ENCODE measurements at regions of chr1 and their contacts with region 1.

Region 1: GRCh38 chr1:151739590-151740375 is 18.5 kb downstream of the RIIAD1 start:
- DNase-seq: peak; percentile 75
- H3K4me3 Mint-ChIP-seq: no peak overlapping the region
- H3K27ac Mint-ChIP-seq: no peak overlapping the region
- H3K4me1 Mint-ChIP-seq: peaks cover 17% of the 10 kb centered on the region
- H3K27me3 Mint-ChIP-seq: no peaks in the 10 kb centered on the region
- CTCF ChIP-seq: no peak

Region 2: GRCh38 chr1:151443846-151444782 is 295.7 kb before region 1 on chr1:
- CTCF ChIA-PET with region 1: interaction called, 5 read pairs
- intact Hi-C with region 1: loop called (anchors 5 kb)
- DNase-seq: peak; percentile 76
- H3K4me3 Mint-ChIP-seq: no peak overlapping the region
- H3K27ac Mint-ChIP-seq: peak overlapping the region; percentile 9
- H3K4me1 Mint-ChIP-seq: peaks cover 8% of the 10 kb centered on the region
- H3K27me3 Mint-ChIP-seq: no peaks in the 10 kb centered on the region
- CTCF ChIP-seq: peak; percentile 64

Region 3: DNA sequence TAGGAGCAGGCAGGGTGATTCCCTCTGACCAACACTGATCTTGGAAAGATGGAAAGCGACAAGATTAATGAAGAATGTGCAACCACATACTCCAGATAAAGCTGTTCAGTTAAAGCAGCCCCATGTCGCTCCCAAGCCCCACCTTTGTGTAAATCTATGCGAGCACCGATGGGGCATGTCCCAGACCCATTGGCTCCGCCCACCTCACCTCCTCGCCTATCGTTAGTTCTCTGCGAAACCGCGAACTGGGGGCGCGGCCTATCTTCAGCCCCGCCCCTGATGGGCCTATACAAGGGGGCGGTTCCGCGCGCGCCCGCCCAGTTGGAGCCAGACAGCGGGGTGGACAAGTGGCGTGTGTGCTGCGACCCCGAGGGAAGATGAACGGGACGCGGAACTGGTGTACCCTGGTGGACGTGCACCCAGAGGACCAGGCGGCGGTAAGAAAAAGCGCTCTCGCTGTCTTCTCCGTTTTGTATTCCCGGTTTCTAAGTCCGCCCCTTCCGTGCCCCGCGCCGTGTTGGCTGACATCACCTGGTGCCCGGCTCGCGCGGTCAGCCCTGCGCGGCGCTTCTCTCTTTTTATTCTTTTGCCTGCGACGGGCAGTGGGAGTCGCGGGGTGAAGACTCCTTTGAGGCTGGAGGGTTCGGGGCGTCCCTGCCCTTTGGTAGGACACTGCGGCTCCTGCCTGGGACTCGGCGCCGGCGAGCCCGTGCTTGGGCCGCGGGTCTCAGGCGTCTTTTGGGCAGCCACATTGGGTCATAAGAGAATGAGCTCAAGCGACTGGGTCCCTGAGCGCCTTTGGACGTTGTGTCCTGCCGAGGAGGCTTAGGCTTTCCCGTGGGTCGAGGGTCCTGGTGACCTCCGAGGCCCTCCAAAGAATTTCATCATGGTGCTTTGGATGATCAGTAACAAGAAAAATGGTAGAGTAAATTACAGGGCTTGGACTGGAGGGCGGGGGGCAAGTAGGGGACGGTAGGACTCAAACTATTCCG is 199.5 kb before region 1 on chr1 and contains the start of gene TUFT1:
- CTCF ChIA-PET with region 1: no interaction called
- intact Hi-C with region 1: loop called (anchors 5 kb)
- DNase-seq: peak; percentile 98
- H3K4me3 Mint-ChIP-seq: peak within 1 kb of the TSS; percentile 86
- H3K27ac Mint-ChIP-seq: peak within 1 kb of the TSS; percentile 92
- H3K4me1 Mint-ChIP-seq: peaks cover 28% of the 10 kb centered on the region
- H3K27me3 Mint-ChIP-seq: no peaks in the 10 kb centered on the region
- CTCF ChIP-seq: no peak
- total RNA-seq, gene TUFT1: 31.4 and 34.3 TPM in 2 replicates

Region 4: DNA sequence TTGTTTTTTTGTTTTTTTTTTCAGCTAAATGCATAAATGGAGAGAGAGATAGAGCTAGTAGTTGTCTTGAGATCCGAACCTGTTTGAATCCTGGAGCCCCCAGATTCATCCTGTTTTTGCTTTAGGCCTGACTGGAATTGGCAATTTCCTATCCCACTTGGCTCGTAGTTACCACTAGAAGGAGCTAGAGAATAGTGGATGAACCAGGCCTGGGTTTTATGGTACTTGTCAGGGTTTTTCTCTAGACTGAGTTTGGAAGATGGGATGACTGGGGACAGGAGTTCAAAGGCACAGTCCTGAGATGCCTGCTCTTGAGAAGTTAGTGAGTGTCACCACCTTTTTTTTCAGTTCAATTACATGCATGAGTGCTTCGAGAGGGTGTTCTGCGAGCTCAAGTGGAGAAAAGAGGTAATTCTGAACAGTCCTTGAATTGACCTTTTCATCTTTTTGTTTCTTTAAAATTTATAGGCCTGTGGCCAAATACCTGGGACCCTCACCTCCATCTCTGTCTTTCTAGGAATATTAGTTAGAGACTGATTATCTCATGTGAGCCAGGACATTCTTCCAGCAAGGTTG is 46.6 kb before region 1 on chr1:
- CTCF ChIA-PET with region 1: interaction called, 17 read pairs
- intact Hi-C with region 1: loop called (anchors 1 kb)
- DNase-seq: peak; percentile 34
- H3K4me3 Mint-ChIP-seq: no peak overlapping the region
- H3K27ac Mint-ChIP-seq: no peak overlapping the region
- H3K4me1 Mint-ChIP-seq: no peaks in the 10 kb centered on the region
- H3K27me3 Mint-ChIP-seq: no peaks in the 10 kb centered on the region
- CTCF ChIP-seq: peak; percentile 39